ENCODE measurements at regions of chr13 and their contacts with region 1.

Region 1: GRCh38 chr13:107211073-107211472 is 643.1 kb upstream of the ARGLU1 start:
- DNase-seq: peak; percentile 72
- ATAC-seq: peak; percentile 95
- H3K4me3 ChIP-seq: peak overlapping the region; percentile 21
- H3K27ac ChIP-seq: no peak overlapping the region
- H3K4me1 ChIP-seq: peaks cover 10% of the 10 kb centered on the region
- H3K27me3 ChIP-seq: no peaks in the 10 kb centered on the region
- CTCF ChIP-seq: peak; percentile 93

Region 2: DNA sequence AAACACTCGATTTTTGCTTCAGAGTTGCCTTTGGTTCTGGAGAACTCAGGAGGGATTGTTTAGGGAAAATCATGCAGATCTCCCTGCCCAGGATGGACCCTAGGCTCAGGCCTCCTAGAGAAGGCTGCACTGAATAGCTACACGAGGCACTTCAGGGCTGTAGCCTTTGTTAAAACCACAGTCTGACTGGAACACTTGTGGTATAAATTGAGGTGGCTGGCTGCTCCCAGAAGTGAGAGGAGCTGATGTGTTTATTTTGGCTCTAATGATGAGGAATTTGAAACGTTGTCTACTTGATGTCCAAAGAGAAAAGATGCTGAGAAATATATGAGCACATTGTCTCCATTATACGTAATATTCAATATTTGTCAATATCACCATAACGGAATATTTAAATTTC is 118.9 kb after region 1 on chr13:
- intact Hi-C with region 1: no loop called
- DNase-seq: no peak
- ATAC-seq: no peak
- H3K4me3 ChIP-seq: no peak overlapping the region
- H3K27ac ChIP-seq: no peak overlapping the region
- H3K4me1 ChIP-seq: no peaks in the 10 kb centered on the region
- H3K27me3 ChIP-seq: no peaks in the 10 kb centered on the region
- CTCF ChIP-seq: no peak

Region 3: GRCh38 chr13:108155185-108156106 is 944.4 kb after region 1 on chr13:
- intact Hi-C with region 1: loop called (anchors 10 kb)
- DNase-seq: peak; percentile 69
- ATAC-seq: peak; percentile 69
- H3K4me3 ChIP-seq: no peak overlapping the region
- H3K27ac ChIP-seq: no peak overlapping the region
- H3K4me1 ChIP-seq: no peaks in the 10 kb centered on the region
- H3K27me3 ChIP-seq: no peaks in the 10 kb centered on the region
- CTCF ChIP-seq: peak; percentile 91

Measured in upper lobe of right lung (tissue), 1 donor.